ENCODE measurements at regions of chr2 and their contacts with region 1.

Region 1: DNA sequence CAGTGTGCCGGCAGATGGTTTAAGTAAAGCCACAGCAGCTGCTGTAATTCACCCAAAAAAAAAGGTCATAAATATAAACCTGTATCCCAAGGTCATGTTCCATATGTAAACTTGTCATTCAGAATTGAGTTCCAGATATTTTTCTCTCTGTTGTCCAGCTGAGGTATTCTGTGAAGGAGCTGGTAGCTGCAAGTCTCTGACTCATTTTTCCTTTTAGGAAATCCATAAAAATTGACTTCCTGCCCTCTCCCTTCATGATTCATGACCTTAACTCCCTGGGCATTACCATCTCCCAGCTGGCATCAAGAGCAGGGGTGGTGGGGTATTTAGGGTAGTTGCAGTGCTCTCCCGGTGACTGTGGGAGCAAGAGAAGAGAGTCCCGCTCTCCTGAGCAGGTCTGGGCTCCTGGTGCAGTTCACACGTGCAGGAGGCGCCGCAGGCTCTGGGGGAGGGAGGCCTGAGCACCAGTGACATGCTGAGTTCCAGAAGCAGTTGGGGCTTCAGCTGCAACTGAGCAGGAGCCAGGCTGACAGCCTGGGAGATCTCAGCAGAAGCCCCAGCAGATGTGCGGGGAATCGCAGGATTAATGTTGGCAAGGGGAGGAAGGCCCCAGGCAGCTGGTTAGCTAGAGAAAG is 192.6 kb downstream of the MGAT5 start:
- DNase-seq: no peak
- H3K4me3 ChIP-seq: no peak overlapping the region
- CTCF ChIP-seq: no peak

Region 2: DNA sequence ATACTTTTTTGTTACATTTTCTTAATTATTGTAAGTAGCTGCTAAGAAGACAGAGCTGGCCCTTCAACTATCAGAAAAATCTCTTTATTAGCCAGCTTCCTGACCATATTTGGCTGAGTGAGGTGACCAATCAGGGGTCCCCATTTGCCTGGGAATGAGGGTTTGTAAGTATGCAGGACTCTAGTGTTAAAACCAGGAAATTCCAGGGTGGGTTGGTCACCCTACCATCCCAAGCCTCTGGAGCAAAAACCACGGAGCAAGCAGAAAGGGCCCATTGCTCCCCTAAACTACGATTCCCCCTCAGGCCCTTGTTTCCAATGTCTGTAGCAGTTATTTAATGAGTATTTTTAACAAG is 712.6 kb before region 1 on chr2:
- CTCF ChIA-PET with region 1: no interaction called
- POLR2A ChIA-PET with region 1: no interaction called
- DNase-seq: peak; percentile 94
- H3K4me3 ChIP-seq: no peak overlapping the region
- CTCF ChIP-seq: no peak

Region 3: GRCh38 chr2:133886735-133887660 is 559.5 kb before region 1 on chr2:
- CTCF ChIA-PET with region 1: interaction called, 93 read pairs
- POLR2A ChIA-PET with region 1: no interaction called
- DNase-seq: peak; percentile 70
- H3K4me3 ChIP-seq: 0 out of 2 replicates have a peak overlapping the region, but pooled peaks have one; percentile 13
- CTCF ChIP-seq: peak; percentile 60

Region 4: DNA sequence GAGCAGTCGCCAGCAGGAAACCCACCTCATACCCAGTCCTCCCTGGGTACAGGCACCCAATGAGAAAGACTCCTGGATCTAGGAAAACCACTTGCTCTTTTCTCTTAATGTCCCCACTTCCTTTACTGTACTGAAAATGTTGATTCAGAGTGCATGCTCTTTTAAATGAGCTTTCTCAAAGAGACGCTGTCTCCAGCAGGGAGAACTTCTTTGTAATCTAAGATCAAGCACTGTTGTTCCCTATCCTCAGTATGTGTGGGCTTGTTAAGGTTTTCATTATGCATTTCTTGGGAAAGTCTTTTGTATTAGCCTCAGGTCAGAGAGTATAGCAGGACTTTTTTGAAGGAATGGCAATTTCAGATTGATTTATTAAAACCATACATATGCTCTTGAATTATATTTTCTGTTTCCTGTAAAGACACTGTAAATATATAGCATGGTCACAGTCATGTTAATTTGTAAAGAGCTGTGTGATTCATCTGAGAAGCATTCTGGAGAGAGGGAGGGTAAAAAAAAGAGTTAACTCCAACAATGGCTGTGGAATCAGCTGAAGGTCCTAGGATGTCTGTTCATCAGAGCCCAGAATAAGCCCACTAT is 14.6 kb before region 1 on chr2:
- CTCF ChIA-PET with region 1: interaction called, 78 read pairs
- POLR2A ChIA-PET with region 1: no interaction called
- DNase-seq: no peak
- H3K4me3 ChIP-seq: no peak overlapping the region
- CTCF ChIP-seq: no peak

Region 5: DNA sequence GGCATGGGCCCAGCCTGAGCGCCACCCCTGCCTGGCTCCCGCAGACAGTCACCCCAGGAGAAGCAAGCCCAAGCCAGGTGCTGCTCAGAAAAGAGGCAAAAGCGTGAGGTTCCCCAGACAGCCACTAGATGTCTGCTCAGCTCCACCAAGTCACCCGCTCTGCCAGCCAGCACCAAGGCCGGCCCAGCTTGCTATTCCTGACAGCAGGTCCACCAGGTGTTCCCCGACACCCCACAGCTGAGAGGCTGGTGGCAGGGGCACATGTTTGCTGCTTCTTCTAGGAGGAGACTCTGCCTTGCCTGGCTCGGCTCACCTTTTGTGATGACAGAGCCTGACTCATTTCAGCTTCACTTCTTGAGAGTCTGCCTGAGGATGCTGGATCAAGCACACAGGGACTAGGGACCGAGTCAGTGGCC is 14.1 kb after region 1 on chr2:
- CTCF ChIA-PET with region 1: interaction called, 46 read pairs
- POLR2A ChIA-PET with region 1: no interaction called
- DNase-seq: no peak
- H3K4me3 ChIP-seq: no peak overlapping the region
- CTCF ChIP-seq: peak; percentile 71

Region 6: GRCh38 chr2:134634054-134634753 is 187.7 kb after region 1 on chr2:
- CTCF ChIA-PET with region 1: no interaction called
- POLR2A ChIA-PET with region 1: no interaction called
- DNase-seq: no peak
- H3K4me3 ChIP-seq: no peak overlapping the region
- CTCF ChIP-seq: no peak

Measured in AG04449 (cell line).